Activated CD4-positive, alpha-beta T cell treated with anti-CD3 and anti-CD28 coated beads, Interleukin-2, amount 10 ng/mL, durations not matched to agents 24 days and 14 days (primary cell): ENCODE measurements at regions of chrX and their contacts with region 1.

Region 1: DNA sequence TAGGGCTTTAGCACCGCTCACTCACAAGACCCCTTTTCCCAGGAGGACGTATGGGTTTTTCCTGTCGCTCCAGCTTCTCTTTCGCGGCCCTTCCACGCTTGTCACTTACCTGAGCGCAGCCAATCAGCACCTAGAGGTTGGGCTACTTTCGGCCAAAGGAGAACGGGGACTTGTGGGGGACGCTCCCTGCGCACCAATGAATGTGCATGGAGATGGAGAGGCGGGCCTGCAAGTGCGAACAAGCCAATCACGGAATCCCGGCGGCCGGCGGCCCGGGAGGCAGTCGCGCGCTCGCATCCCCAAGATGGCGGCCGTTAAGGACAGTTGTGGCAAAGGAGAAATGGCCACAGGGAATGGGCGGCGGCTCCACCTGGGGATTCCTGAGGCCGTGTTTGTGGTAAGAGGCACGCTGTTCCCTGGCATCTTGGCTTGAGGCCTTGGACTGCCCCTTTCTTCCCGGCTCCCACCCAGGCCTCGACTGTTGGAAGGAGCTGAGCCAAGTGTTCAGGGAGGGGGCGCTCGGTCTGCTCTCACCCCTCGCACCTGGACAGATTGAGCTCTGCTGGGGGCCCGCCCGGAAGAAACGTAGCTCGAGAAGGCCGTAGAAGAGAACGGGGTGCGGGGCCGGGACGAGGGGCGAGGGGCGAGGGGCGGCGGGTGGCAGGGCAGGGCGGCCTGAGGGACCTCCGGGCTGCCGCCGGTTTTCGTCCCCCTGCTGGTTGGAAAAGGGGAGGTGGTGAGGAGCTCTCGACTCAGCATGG is at the start of gene VBP1:
- DNase-seq: peak; percentile 95
- H3K4me3 Mint-ChIP-seq: peak within 1 kb of the TSS; percentile 99
- H3K27ac Mint-ChIP-seq: peak within 1 kb of the TSS; percentile 90
- H3K4me1 Mint-ChIP-seq: peaks cover 19% of the 10 kb centered on the region
- H3K27me3 Mint-ChIP-seq: no peaks in the 10 kb centered on the region
- total RNA-seq, gene VBP1: 86.4 and 87.5 TPM in 2 replicates

Region 2: DNA sequence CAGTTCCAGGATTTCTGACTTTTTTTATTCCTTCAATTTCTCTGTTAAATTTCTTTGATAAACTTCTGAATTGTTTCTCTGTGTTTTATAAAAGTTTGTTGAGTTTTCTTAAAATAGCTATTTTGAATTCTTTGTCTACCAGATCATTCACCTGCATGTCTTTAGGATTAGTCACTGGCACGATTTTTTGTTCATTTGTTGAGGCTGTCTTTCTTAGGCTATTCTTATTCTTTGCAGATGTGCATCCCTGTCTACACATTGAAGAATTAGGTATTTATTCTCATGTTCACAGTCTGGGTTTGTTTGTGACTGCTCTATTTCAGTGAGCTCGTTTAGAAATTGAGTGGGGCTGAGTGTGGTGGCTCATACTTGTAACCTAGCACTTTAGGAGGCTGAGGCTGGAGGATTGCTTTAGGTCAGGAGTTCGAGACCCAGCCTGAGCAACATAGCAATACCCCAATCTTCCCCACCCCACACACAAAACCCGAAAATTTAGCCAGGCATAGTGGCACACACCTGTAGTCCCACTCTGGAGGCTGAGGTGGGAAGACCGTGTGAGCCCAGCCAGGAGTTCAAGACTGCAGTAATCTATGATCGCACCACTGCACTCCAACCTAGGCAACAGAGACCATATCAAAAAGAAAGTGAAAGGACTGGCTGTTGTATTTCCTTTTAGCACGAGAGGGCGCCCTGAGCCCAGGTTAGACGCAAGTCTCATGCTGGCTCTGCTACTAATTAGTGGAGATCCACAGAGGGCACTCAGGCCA is 235.8 kb before region 1 on chrX:
- intact Hi-C with region 1: loop called (anchors 1 kb)
- DNase-seq: peak; percentile 94
- H3K4me3 Mint-ChIP-seq: peak overlapping the region; percentile 79
- H3K27ac Mint-ChIP-seq: peak overlapping the region; percentile 84
- H3K4me1 Mint-ChIP-seq: peaks cover 9% of the 10 kb centered on the region
- H3K27me3 Mint-ChIP-seq: peaks cover under 1% of the 10 kb centered on the region

Region 3: DNA sequence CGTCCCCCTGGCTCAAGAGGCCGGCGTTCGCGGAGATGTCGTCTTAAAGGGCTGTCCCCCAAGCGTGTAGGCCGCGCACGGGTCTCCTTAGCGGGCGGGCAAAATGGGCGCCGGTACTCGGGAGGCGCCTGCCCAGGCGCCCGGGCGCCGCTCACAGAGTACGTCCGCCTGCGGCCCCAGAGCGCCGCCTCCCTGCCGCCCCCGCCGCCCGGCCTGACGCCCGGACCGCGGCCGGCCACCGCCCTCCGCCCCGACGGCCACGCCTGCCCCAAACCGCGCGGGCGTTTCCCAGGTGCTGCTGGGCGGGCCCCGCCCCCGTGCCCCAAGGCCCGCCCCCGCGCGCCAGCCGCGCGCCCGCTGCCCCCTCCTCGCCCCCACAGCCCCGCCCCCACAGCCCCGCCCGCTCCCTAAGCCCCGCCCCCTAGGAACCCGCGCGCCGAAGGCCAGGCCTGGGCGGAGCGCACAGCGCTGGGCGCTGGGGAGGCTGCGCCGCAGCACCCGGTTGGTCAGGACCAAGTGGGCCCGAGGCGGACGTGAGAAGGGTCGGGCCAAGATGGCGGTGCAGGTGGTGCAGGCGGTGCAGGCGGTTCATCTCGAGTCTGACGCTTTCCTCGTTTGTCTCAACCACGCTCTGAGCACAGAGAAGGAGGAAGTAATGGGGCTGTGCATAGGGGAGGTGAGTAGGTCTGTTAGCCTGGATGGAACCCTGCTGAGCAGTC is 145.2 kb before region 1 on chrX and contains the starts of genes BRCC3, CMC4 and MTCP1:
- intact Hi-C with region 1: loop called (anchors 2 kb)
- DNase-seq: peak; percentile 93
- H3K4me3 Mint-ChIP-seq: peak within 1 kb of the TSS; percentile 95
- H3K27ac Mint-ChIP-seq: peak within 1 kb of the TSS; percentile 97
- H3K4me1 Mint-ChIP-seq: peaks cover 39% of the 10 kb centered on the region
- H3K27me3 Mint-ChIP-seq: no peaks in the 10 kb centered on the region
- total RNA-seq, gene BRCC3: 28.8 and 28.9 TPM in 2 replicates
- total RNA-seq, gene CMC4: 2.5 and 3.6 TPM in 2 replicates
- total RNA-seq, gene MTCP1: 9.8 and 11.4 TPM in 2 replicates

Region 4: GRCh38 chrX:155263854-155264628 is 47.7 kb after region 1 on chrX and contains the start of gene RAB39B:
- intact Hi-C with region 1: loop called (anchors 1 kb)
- DNase-seq: peak; percentile 89
- H3K4me3 Mint-ChIP-seq: peak within 1 kb of the TSS; percentile 92
- H3K27ac Mint-ChIP-seq: peak within 1 kb of the TSS; percentile 94
- H3K4me1 Mint-ChIP-seq: peaks cover 11% of the 10 kb centered on the region
- H3K27me3 Mint-ChIP-seq: no peaks in the 10 kb centered on the region
- total RNA-seq, gene RAB39B: 9.5 and 9.9 TPM in 2 replicates